ENCODE measurements at regions of chr14 and their contacts with region 1.

Region 1: DNA sequence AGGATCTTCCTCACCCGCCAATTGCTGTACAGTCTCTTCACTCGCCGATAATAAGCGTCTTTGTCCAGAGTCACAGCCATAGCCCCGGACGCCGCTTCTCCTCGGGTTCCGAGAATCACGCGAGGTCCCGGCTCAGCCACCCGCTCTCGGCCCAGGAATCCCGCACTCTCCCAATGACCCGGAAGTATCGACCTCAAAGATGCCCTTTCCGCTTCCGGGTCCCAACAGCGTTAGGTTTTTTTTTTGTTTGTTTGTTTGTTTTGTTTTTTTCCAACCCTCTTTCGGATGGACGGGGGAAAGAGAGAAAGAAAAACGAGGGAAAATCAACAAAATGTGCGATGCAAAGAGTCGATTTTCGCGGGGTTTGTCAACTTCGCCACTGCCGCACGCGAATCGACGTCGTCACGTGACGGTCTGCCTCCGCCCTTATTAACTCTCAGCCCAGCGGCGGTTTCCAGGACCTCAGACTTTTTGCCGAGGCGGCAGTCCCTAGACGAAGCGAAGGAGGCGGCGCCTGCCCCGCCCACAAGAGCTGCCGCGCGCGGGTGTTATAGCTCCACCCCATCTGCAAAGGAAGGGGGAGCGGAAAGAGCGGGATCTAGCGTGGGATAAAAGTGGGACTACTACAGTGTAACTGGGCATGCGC is at the start of gene SUPT16H:
- DNase-seq: peak; percentile 96 to 97
- H3K4me3 ChIP-seq: peak within 1 kb of the TSS; percentile 89
- H3K4me3 Mint-ChIP-seq: peak within 1 kb of the TSS; percentile 85
- H3K27ac Mint-ChIP-seq: peak within 1 kb of the TSS; percentile 95
- H3K4me1 ChIP-seq: peaks cover 10% of the 10 kb centered on the region
- H3K4me1 Mint-ChIP-seq: peaks cover 12% of the 10 kb centered on the region
- H3K27me3 ChIP-seq: no peaks in the 10 kb centered on the region
- H3K27me3 Mint-ChIP-seq: no peaks in the 10 kb centered on the region
- CTCF ChIP-seq: no peak
- total RNA-seq, gene SUPT16H: 114 and 118 TPM in 2 replicates

Region 2: DNA sequence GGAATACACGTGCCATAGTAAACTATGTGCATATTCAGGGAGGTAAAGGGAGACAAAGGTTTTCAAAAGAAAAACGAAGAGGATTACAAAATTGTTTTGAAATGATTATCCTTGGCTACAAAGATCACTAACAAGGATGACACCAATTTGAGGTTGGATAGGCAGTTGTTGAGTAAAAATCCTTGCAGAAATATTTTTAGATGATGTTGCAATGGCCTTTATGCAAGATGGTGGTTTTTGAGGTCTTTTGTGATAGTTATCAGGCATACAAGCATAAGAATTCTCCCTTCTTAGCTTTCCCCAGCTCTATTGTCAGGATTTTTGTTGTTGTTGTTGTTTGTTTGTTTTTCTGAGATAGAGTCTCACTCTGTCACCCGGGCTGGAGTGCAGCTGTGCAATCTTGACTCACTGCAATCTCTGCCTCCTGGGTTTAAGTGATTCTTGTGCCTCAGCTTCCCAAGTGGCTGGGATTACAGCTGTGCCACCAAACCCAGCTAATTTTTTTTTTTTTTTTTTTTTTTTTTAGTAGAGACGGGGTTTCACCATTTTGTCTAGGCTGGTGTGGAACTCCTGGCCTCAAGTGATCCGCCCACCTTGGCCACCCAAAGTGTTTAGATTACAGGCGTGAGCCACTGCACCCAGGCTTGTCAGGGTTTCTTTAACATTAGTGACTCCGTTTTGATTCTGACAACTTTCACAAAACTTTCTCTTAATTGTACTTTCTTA is 589.2 kb before region 1 on chr14:
- CTCF ChIA-PET with region 1: no interaction called
- POLR2A ChIA-PET with region 1: no interaction called
- intact Hi-C with region 1: no loop called
- DNase-seq: no peak
- H3K4me3 ChIP-seq: no peak overlapping the region
- H3K4me3 Mint-ChIP-seq: no peak overlapping the region
- H3K27ac Mint-ChIP-seq: no peak overlapping the region
- H3K4me1 ChIP-seq: peaks cover 16% of the 10 kb centered on the region
- H3K4me1 Mint-ChIP-seq: peaks cover 21% of the 10 kb centered on the region
- H3K27me3 ChIP-seq: no peaks in the 10 kb centered on the region
- H3K27me3 Mint-ChIP-seq: no peaks in the 10 kb centered on the region
- CTCF ChIP-seq: no peak

Region 3: DNA sequence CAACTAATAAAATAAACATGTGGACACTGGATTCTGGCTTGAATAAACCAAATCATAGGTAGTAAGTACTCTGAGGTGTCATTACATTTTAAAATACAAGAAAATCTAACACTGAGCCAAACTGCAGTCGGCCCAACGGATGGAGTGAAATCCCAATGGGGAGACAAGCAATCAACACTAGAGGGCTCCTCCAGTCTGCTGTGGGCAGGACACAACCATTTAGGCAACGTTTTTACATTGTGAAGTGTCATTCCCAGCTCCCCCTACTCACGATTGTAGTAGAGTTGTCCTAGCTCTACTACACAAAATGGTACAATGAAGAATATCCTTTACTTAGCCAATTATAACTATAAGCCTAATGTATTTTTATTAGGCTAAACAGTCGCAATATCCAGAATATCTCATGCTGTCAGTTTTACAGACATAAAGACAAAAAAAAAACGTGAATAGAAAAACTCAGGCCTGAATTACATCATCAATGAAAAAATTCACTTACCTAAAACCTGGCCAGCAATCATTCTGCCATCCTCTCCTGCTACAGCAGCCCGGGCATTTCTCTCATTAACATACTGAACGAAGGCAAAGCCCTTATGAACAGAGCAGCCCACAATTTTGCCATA is 150.4 kb before region 1 on chr14:
- CTCF ChIA-PET with region 1: no interaction called
- POLR2A ChIA-PET with region 1: interaction called, 3 read pairs
- intact Hi-C with region 1: loop called (anchors 10 kb)
- DNase-seq: peak in 1 of 2 experiments; percentile 35
- H3K4me3 ChIP-seq: no peak overlapping the region
- H3K4me3 Mint-ChIP-seq: no peak overlapping the region
- H3K27ac Mint-ChIP-seq: no peak overlapping the region
- H3K4me1 ChIP-seq: 0 out of 2 replicates have a peak, but pooled peaks cover 7% of the 10 kb centered on the region
- H3K4me1 Mint-ChIP-seq: peaks cover 16% of the 10 kb centered on the region
- H3K27me3 ChIP-seq: no peaks in the 10 kb centered on the region
- H3K27me3 Mint-ChIP-seq: no peaks in the 10 kb centered on the region
- CTCF ChIP-seq: peak; percentile 12 to 34

Region 4: GRCh38 chr14:21269252-21270046 is 114.5 kb before region 1 on chr14 and contains the start of gene HNRNPC:
- CTCF ChIA-PET with region 1: no interaction called
- POLR2A ChIA-PET with region 1: no interaction called
- intact Hi-C with region 1: loop called (anchors 1 kb)
- DNase-seq: peak; percentile 100
- H3K4me3 ChIP-seq: peak within 1 kb of the TSS; percentile 53
- H3K4me3 Mint-ChIP-seq: peak within 1 kb of the TSS; percentile 98
- H3K27ac Mint-ChIP-seq: peak within 1 kb of the TSS; percentile 100
- H3K4me1 ChIP-seq: peaks cover 12% of the 10 kb centered on the region
- H3K4me1 Mint-ChIP-seq: peaks cover 14% of the 10 kb centered on the region
- H3K27me3 ChIP-seq: no peaks in the 10 kb centered on the region
- H3K27me3 Mint-ChIP-seq: no peaks in the 10 kb centered on the region
- CTCF ChIP-seq: no peak
- total RNA-seq, gene HNRNPC: 512 and 536 TPM in 2 replicates

Region 5: GRCh38 chr14:21437063-21437901 is 53.3 kb after region 1 on chr14:
- CTCF ChIA-PET with region 1: no interaction called
- POLR2A ChIA-PET with region 1: interaction called, 13 read pairs
- intact Hi-C with region 1: no loop called
- DNase-seq: peak; percentile 99
- H3K4me3 ChIP-seq: peak overlapping the region; percentile 93
- H3K4me3 Mint-ChIP-seq: peak overlapping the region; percentile 96
- H3K27ac Mint-ChIP-seq: peak overlapping the region; percentile 94
- H3K4me1 ChIP-seq: peaks cover 10% of the 10 kb centered on the region
- H3K4me1 Mint-ChIP-seq: peaks cover 13% of the 10 kb centered on the region
- H3K27me3 ChIP-seq: no peaks in the 10 kb centered on the region
- H3K27me3 Mint-ChIP-seq: no peaks in the 10 kb centered on the region
- CTCF ChIP-seq: no peak